Sciatic nerve (tissue), 2 donors: ENCODE measurements at regions of chr5 and their contacts with region 1.

Region 1: GRCh38 chr5:108858959-108859358 is 111.3 kb downstream of the FER start:
- DNase-seq: no peak
- ATAC-seq: no peak

Region 2: GRCh38 chr5:108251350-108251749 is 607.6 kb before region 1 on chr5:
- intact Hi-C with region 1: loop called (anchors 5 kb)
- DNase-seq: no peak
- ATAC-seq: no peak

Region 3: DNA sequence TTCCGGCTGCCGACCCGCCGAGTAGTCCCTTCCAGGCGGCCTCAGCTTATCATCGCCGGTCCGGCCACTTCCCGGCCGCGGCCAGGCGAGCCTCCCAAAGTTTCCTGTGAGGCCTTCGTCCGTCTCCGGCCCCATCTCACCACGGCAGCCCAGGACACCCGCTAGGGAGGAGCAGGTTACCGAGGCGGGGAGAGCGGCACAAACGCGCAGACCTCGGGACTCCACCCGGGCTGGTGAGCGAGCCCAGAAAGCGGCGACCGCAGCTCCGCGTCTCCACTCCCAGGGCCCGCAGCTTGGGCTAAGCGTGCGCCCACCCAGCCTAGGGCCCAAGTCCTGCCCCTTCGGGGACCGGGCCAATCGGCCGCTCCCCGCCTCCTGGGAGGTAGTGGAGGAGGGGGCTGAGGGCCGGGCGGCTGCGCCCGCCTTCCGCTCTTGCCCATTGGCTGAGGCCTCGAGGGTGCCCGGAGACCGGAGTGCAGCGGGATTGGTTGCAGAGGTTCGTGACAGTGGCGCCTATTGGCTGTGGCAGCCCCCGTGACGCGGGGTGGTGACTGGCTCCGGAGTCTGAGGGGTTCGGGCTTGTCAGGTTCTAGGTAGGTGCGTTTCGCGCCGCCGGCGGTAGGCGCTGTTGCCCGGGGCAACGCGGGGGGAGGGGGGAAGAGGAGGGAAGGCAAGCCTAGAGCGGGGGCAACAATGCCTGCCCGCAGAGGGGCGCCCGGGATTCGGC is 110.4 kb before region 1 on chr5:
- intact Hi-C with region 1: no loop called
- DNase-seq: peak; percentile 98
- ATAC-seq: peak; percentile 98

Region 4: DNA sequence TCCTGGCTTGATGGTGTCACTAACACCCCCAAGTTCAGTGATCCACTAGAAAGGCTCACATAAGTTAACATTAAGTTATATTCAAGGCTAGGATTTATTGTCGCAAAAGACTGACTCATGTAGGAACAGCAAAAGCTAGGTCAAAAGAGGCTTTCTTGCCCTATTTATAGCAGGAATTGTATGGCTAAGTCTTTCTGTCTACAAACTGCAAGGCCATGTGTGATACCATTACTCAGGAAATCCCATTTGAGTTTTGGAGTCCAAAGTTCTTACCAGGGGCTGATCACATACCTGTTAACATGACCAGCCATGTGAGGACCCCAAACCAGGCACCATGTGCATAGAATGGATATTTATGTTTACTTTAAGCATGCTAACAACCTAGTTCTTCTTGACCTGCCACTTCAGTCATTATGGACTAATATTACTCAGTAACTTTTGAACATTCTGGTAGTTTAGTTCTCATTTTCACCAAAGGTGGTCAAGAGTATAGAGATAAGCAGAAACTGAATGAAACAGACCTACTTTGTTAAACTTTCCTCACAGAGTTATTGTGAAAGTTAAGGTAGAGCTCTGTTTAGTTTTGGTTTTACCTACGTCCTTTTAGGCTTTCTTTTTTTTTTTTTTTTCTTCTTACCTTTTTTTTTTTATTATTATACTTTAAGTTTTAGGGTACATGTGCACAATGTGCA is 169.8 kb after region 1 on chr5:
- intact Hi-C with region 1: no loop called
- DNase-seq: no peak
- ATAC-seq: no peak